PC-9 (cell line): ENCODE measurements at regions of chr5 and their contacts with region 1.

Region 1: DNA sequence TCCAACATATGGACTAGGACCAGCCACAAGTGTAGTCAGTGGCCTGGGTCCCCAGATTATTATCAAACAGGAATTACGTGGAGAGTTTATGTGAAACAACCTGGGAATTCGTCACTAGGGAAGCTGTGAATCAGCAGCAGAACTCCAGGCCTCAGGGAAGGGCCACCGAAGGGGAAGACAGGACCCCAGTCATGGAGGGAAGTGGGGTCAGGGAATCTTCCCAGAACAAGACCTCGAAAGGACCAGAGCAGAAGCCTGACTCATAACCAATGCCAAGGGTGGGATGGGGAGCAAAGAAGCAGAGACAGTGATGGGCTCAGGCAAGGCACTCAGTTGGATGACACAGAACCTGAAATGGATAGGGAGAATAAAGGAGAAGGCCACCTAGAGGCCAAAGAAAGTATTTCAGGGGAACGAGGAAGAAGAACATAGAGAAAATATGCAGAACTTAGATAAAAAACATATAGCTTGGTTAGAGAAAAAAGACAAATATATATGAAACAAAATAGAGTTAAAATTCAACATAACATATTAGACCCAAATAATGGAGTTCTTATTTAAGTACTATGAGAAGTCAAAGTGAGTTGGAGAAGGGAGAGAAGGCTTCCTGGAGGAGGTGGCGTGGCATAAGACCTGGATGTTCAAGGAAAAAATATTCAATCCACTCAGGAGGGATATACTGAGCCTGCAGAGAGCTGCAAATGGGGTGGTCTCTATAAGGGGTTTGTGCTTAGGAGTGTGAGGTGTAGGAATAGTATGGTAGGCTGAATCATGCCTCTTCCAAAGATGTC is 66.7 kb upstream of the CAST start:
- DNase-seq: no peak
- H3K4me3 ChIP-seq: no peak overlapping the region
- H3K27ac ChIP-seq: no peak overlapping the region
- H3K4me1 ChIP-seq: no peaks in the 10 kb centered on the region
- H3K27me3 ChIP-seq: no peaks in the 10 kb centered on the region
- CTCF ChIP-seq: peak; percentile 58

Region 2: DNA sequence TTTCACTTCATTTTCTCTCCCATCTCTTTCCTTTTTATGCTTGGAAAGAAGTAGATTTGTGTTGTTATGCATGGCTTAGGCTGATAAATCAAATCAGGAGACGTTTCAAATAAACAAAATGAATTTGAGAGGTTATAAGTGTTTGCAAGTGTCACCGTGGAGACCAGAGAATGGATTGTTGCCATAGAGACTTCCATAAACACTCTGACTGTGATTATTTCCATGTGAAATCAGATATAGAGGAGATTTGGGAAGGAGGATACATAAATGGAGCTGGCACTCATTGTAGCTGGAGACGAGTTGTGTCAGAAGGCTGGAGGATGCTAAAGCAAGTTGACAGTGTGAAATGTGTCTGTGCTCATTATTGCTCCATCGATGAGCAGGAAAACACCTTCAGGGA is 78.2 kb before region 1 on chr5:
- CTCF ChIA-PET with region 1: no interaction called
- POLR2A ChIA-PET with region 1: no interaction called
- intact Hi-C with region 1: no loop called
- DNase-seq: no peak
- H3K4me3 ChIP-seq: no peak overlapping the region
- H3K27ac ChIP-seq: no peak overlapping the region
- H3K4me1 ChIP-seq: no peaks in the 10 kb centered on the region
- H3K27me3 ChIP-seq: no peaks in the 10 kb centered on the region
- CTCF ChIP-seq: no peak

Region 3: GRCh38 chr5:96718635-96719077 is 123.2 kb after region 1 on chr5:
- CTCF ChIA-PET with region 1: no interaction called
- POLR2A ChIA-PET with region 1: interaction called, 10 read pairs
- intact Hi-C with region 1: no loop called
- DNase-seq: peak in 1 of 2 experiments; percentile 51
- H3K4me3 ChIP-seq: no peak overlapping the region
- H3K27ac ChIP-seq: no peak overlapping the region
- H3K4me1 ChIP-seq: peaks cover 20% of the 10 kb centered on the region
- H3K27me3 ChIP-seq: no peaks in the 10 kb centered on the region
- CTCF ChIP-seq: no peak